Posterior vena cava (tissue), 2 donors: ENCODE measurements at regions of chr2 and their contacts with region 1.

Region 1: DNA sequence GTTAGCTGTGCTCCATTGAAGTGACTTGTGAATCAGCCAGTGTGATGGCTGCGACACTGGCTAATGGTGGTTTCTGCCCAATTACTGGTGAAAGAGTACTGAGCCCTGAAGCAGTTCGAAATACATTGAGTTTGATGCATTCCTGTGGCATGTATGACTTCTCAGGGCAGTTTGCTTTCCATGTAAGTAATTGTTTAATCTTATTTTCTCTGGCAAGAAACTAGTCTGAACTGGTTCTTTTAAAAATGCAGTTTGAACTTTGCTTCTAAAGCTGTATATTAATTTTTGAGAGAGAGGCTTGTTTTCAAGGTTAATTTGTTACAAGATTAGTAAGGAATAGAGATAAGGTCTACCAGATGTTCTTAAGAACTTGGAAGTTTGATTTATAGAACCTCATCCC is 46.7 kb downstream of the GLS start:
- DNase-seq: no peak

Region 2: GRCh38 chr2:190835303-190835930 is 91.9 kb before region 1 on chr2:
- intact Hi-C with region 1: no loop called
- DNase-seq: peak; percentile 84

Region 3: GRCh38 chr2:190911813-190912212 is 15.5 kb before region 1 on chr2:
- intact Hi-C with region 1: loop called in 1 of 2 experiments (anchors 2 kb)
- DNase-seq: no peak

Region 4: DNA sequence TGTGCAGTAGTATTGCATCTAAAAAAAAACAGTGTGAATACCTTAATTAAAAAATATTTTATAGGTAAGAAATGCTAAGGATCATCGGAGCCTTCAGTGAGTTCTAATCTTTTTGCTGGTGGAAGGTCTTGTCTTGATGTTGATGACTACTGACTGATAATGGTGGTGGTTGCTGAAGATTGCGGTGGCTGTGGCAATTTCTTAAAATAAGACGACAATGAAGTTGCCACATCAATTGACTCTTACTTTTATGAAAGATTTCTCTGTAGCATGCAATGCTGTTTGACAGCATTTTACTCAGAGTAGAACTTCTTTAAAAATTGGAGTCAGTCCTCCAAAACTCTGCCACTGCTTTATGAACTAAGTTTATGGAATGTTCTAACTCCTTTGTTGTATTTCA is 10.5 kb before region 1 on chr2:
- intact Hi-C with region 1: loop called in 1 of 2 experiments (anchors 1 kb)
- DNase-seq: no peak